GM10248 (cell line): ENCODE measurements at regions of chr11 and their contacts with region 1.

Region 1: DNA sequence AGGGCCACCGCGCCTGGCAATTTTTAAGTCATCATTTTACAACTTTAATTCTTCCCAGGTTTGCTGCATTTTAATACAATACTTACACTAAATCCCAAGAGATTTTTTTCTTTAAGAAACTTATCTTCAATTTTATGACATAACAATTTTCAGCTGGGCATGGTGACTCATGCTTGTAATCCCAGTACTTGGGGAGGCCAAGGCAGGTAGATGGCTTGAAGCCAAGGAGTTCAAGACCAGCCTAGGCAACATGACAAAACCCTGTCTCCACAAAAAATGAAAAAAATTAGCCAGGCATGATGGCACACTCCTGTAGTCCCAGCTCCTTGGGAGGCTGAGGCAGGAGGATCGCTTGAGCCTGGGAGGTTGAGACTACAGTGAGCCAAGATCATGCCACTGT is 38.8 kb downstream of the CLDN25 start:
- DNase-seq: no peak
- CTCF ChIP-seq: no peak

Region 2: DNA sequence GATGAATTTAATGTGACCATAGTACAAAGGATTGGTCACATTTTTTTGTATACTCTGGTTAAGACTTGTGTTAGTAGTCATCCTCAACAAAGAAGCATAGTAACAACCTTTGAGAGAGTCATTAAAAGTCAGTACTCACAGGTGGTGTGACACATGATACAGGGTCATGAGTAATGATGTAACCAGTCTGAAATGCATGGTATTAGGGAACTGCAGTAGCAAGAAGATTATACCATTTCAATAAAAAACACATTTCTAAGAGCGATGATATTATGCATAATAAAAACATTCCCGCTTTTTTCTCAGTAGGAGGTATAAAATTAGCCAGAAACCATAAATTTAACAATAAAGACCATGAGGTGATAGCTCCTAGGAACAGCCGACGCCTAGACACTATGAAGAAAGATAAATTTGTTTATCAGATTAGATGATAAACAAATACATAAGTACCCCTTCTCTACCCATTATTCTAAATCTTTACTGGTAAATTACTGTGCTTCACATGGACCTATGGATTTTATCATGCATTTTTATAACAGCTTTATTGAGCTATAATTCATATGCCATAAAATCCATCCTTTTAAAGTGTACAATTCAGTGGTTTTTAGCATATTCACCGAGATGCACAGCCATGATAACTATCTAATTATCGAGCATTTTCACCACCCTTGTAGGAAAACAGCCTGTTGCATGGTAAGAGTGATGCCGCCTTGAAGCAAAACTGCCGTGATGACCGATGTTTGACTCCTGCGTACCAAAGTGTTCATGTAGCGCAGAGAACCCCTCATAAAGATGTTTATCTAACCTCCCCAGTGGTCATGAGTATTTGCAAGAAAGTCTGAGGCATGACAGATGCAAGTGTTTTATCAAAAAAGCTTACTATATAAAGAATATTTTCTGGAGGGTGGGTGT is 154.1 kb before region 1 on chr11:
- CTCF ChIA-PET with region 1: no interaction called
- POLR2A ChIA-PET with region 1: no interaction called
- DNase-seq: no peak
- CTCF ChIP-seq: no peak

Region 3: DNA sequence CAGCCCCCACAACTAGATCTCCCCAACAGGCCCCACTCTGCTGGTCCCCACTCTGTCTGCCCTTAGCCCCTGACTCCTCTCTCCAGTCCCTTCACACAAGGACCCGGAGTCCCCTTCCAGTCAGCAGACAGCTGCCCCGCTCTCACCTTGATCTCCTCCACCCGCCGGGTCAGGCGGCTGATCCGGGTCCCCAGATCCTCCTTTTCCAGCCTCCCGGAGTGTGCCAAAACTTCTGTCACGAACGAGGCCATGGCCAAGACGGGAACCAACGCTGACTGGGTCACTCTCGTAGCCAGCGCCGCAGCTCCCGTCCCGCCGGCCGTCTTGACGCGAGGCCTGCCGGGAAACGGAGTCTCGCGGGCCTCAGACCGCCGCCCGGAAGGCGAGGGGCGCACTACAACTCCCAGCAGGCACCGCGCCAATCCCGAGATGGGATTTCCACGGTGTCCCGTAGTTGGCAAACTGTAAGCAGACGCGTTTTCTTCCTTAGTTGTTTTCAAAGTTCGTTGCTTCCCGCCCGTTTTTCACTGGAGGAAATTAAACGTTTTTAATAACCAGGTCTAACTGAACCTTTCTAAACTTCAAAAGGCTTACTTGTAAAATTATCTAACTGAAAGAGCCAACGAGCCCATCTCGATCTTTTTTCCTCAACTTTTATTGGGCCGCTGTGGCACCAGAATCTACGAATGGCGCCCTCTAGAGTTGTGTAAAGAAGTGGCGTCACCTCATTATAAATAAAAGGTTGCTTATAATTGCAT is 44.8 kb before region 1 on chr11 and contains the start of gene ZW10:
- CTCF ChIA-PET with region 1: interaction called, 4 read pairs
- POLR2A ChIA-PET with region 1: interaction called, 10 read pairs
- DNase-seq: peak; percentile 91
- CTCF ChIP-seq: peak; percentile 77

Region 4: DNA sequence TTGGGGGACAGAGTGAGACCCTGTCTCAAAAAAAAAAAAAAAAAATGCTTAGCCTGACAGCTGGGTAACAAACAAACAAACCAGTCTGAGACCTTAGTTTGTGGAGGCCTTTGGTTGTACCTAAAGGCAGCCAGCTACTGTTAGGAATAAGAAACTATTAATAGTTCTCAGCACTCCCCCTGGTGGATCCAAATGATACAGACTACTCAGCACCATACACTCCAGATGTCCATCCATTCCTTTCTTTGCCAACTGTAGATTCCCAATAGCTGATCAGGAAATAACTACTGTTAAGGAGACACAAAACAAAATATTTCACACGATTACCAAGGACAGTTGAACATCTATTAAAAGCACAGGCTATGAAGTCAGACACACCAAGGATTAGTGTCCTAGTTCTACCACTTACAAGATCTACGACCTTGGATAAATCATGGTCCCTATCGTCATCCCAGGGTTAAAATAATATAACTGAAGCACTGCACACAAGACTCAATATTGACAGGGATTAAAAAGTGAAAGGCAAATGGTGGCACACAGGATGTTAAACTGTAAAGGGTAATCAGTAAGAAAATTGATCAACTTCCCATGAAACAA is 21.7 kb before region 1 on chr11:
- CTCF ChIA-PET with region 1: interaction called, 13 read pairs
- POLR2A ChIA-PET with region 1: no interaction called
- DNase-seq: peak; percentile 55
- CTCF ChIP-seq: peak; percentile 52

Region 5: GRCh38 chr11:113806406-113806805 is 12.0 kb before region 1 on chr11:
- CTCF ChIA-PET with region 1: interaction called, 32 read pairs
- POLR2A ChIA-PET with region 1: no interaction called
- DNase-seq: peak; percentile 43
- CTCF ChIP-seq: peak; percentile 65

Region 6: GRCh38 chr11:113862435-113862834 is 44.0 kb after region 1 on chr11:
- CTCF ChIA-PET with region 1: no interaction called
- POLR2A ChIA-PET with region 1: no interaction called
- DNase-seq: no peak
- CTCF ChIP-seq: no peak

Region 7: DNA sequence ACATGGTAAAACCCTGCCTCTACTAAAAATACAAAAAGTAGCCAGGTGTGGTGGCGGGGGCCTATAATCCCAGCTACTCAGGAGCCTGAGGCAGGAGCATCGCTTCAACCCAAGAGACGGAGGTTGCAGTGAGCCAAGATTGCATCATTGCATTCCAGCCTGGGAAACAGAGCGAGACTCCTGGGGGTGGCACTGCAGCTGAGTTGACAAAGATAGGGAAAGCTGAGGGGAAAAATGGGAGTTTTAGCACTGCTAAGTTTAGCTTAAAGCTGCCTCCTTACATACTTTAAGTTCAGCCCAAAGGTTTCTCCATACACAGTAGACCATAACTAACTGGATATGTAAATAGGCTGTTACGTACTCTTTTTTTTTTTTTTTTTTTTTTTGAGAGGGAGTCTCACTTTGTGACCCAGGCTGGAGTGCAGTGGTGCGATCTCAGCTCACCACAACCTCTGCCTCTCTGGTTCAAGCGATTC is 66.0 kb after region 1 on chr11:
- CTCF ChIA-PET with region 1: no interaction called
- POLR2A ChIA-PET with region 1: no interaction called
- DNase-seq: no peak
- CTCF ChIP-seq: no peak

Region 8: GRCh38 chr11:113906038-113906437 is 87.6 kb after region 1 on chr11:
- CTCF ChIA-PET with region 1: no interaction called
- POLR2A ChIA-PET with region 1: no interaction called
- DNase-seq: no peak
- CTCF ChIP-seq: no peak